ENCODE measurements at regions of chr7 and their contacts with region 1.

Region 1: GRCh38 chr7:36128448-36129047 is 24.5 kb upstream of the EEPD1 start:
- DNase-seq: peak; percentile 73
- H3K4me3 ChIP-seq: no peak overlapping the region; the same call in 1 of the 2 replicates
- H3K27ac ChIP-seq: peak overlapping the region; percentile 55
- H3K27me3 ChIP-seq: no peaks in the 10 kb centered on the region
- CTCF ChIP-seq: peak; percentile 79

Region 2: DNA sequence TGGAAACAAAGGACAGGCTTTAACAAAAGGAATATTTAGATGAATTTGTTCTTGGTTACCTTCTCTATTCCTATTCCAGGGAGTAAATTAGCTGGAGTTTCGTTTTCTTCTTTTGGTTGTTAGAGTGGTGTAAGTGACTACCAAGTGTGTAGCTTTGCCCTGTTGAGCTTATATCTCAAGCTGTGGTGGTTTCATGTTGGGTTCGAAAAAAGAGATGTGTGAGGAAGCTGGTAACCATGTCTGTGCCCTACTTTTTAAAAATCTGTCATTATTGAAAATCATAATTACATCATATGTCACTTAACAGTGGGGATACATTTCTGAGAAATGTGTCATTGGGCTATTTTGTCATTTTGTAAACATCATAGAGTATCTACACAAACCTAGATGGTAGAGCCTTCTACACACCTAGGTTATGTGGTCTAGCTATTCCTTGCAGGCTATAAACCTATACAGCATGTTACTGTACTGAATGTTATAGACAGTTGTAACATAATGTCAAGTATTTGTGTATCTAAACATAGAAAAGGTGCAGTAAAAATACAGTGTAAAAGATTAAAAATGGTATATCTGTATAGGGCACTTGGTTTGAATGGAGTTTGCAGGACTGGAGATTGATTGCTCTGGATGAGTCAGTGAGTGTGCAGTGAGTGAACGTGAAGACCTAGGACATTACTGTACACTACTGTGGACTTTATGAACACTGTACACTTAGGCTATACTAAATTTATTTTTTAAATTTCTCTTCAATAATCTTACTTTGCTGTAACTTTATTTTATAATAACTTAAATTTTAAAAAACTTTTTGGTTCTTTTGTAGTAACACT is 237.3 kb before region 1 on chr7:
- CTCF ChIA-PET with region 1: no interaction called
- POLR2A ChIA-PET with region 1: no interaction called
- DNase-seq: no peak
- H3K4me3 ChIP-seq: no peak overlapping the region
- H3K27ac ChIP-seq: no peak overlapping the region
- H3K27me3 ChIP-seq: no peaks in the 10 kb centered on the region
- CTCF ChIP-seq: no peak

Region 3: DNA sequence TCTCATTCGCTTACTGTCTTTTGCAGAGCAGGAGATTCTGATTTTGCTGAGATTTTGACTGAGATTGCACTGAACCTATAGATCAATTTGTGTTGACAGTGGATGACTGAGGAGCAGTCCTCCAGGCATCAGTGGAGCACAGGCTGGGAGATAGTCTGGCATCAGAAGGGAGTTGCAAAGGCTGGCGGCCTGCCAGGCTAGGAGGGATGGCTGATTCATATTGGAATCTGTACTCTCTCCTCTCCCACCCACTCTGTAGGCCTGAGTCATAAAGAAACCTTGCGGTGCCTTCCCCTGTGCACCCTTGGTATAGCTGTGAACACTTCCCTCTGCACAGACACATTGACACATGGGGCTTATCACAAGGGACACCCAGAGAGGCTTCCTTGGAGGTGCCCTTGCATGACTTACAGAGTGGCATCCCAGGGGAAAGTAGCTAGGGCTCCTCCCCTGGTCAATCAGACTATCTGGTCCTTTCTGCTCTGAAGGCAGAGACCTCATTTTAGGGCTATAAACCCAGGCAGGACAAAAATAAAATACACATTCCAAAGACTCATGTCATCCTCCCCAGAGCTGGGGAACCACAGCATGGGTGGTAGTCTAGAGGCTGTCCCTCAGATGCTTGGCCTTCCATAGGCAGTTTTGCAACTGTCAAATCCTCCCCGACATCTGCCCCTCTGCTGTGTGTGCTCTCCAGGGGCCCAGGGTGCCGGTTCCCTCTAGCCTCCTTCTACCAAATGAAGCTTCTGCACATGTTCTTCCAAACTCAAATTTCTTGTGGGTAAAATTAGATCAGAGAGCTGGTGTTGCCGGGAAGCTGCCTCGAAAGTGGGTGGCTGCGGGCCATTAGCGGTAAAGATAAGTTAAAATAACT is 12.9 kb before region 1 on chr7:
- CTCF ChIA-PET with region 1: interaction called, 13 read pairs
- POLR2A ChIA-PET with region 1: interaction called, 3 read pairs
- DNase-seq: peak; percentile 92
- H3K4me3 ChIP-seq: peak overlapping the region; percentile 41
- H3K27ac ChIP-seq: peak overlapping the region; percentile 86
- H3K27me3 ChIP-seq: no peaks in the 10 kb centered on the region
- CTCF ChIP-seq: no peak